Aorta (tissue), 5 donors: ENCODE measurements at regions of chr9 and their contacts with region 1.

Region 1: GRCh38 chr9:13427587-13427986 is 148.1 kb upstream of the MPDZ start:
- DNase-seq: no peak
- ATAC-seq: no peak
- H3K4me3 ChIP-seq: no peak overlapping the region
- H3K27ac ChIP-seq: no peak overlapping the region
- H3K4me1 ChIP-seq: no peaks in the 10 kb centered on the region
- H3K27me3 ChIP-seq: no peaks in the 10 kb centered on the region

Region 2: GRCh38 chr9:13351778-13352386 is 75.7 kb before region 1 on chr9:
- intact Hi-C with region 1: loop called in 1 of 2 experiments (anchors 5 kb)
- DNase-seq: no peak
- ATAC-seq: no peak
- H3K4me3 ChIP-seq: no peak overlapping the region
- H3K27ac ChIP-seq: no peak overlapping the region
- H3K4me1 ChIP-seq: no peaks in the 10 kb centered on the region
- H3K27me3 ChIP-seq: no peaks in the 10 kb centered on the region

Region 3: GRCh38 chr9:14412775-14413174 is 985.2 kb after region 1 on chr9:
- intact Hi-C with region 1: loop called in 1 of 2 experiments (anchors 5 kb)
- DNase-seq: no peak
- ATAC-seq: no peak
- H3K4me3 ChIP-seq: no peak overlapping the region
- H3K27ac ChIP-seq: no peak overlapping the region
- H3K4me1 ChIP-seq: no peaks in the 10 kb centered on the region
- H3K27me3 ChIP-seq: no peaks in the 10 kb centered on the region

Region 4: DNA sequence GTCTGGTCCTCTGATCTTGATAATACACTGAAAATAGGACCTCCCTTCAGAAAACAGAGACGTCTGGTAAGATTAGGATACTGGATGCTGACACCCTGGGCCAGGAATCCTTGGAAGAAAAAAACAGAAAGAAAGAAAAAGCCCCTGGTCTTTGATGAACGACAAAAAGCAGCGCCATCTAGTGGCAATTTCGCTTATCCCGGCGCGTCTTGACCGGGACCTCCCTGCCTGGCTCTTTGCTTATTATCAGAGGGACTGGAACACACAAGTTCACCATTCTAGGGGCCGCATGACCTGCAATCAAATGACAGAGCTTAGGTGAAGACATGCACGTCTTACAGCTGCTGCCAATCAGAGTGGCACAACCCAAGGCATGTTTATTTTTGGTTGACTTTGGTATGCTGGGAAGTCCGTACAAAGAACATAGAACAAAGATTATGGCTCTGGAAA is 1001.2 kb after region 1 on chr9:
- intact Hi-C with region 1: loop called in 1 of 2 experiments (anchors 2 kb)
- DNase-seq: peak; percentile 76 to 89
- ATAC-seq: peak; percentile 51
- H3K4me3 ChIP-seq: no peak overlapping the region
- H3K27ac ChIP-seq: no peak overlapping the region
- H3K4me1 ChIP-seq: peaks cover 2 to 3% of the 10 kb centered on the region in 2 donors
- H3K27me3 ChIP-seq: no peaks in the 10 kb centered on the region